Endothelial cell of umbilical vein (primary cell): ENCODE measurements at regions of chr11 and their contacts with region 1.

Region 1: GRCh38 chr11:78000193-78000592 is 5.7 kb upstream of the INTS4 start:
- DNase-seq: peak; percentile 74
- H3K4me3 ChIP-seq: no peak overlapping the region
- H3K27ac ChIP-seq: no peak overlapping the region
- H3K4me1 ChIP-seq: peaks cover 1% of the 10 kb centered on the region
- H3K27me3 ChIP-seq: peaks cover 0 to 2% of the 10 kb centered on the region in 2 experiments
- CTCF ChIP-seq: peak; percentile 70 to 74
- POLR2A ChIP-seq: no peak

Region 2: GRCh38 chr11:77776455-77776854 is 223.7 kb before region 1 on chr11:
- CTCF ChIA-PET with region 1: interaction called, 29 read pairs
- POLR2A ChIA-PET with region 1: no interaction called
- dilution Hi-C with region 1: no loop called
- intact Hi-C with region 1: loop called (anchors 1 kb)
- DNase-seq: peak; percentile 49
- H3K4me3 ChIP-seq: no peak overlapping the region
- H3K27ac ChIP-seq: no peak overlapping the region
- H3K4me1 ChIP-seq: peaks cover 6% of the 10 kb centered on the region
- H3K27me3 ChIP-seq: no peaks in the 10 kb centered on the region
- CTCF ChIP-seq: peak in 1 of 2 donors; percentile 12
- POLR2A ChIP-seq: no peak

Region 3: GRCh38 chr11:78022397-78023396 is 22.5 kb after region 1 on chr11 and contains the start of gene KCTD14:
- CTCF ChIA-PET with region 1: interaction called, 9 read pairs
- POLR2A ChIA-PET with region 1: no interaction called
- dilution Hi-C with region 1: no loop called
- intact Hi-C with region 1: loop called (anchors 1 kb)
- DNase-seq: no peak
- H3K4me3 ChIP-seq: peak within 1 kb of the TSS in 2 of 3 experiments; percentile 31 to 41
- H3K27ac ChIP-seq: no peak within 1 kb of the TSS
- H3K4me1 ChIP-seq: peaks cover 5% of the 10 kb centered on the region
- H3K27me3 ChIP-seq: no peaks in the 10 kb centered on the region
- CTCF ChIP-seq: no peak
- POLR2A ChIP-seq: no peak
- total RNA-seq, gene KCTD14: 1.1 and 1.8 TPM in 2 replicates

Region 4: GRCh38 chr11:78030429-78031325 is 30.5 kb after region 1 on chr11:
- CTCF ChIA-PET with region 1: interaction called, 5 read pairs
- POLR2A ChIA-PET with region 1: no interaction called
- dilution Hi-C with region 1: no loop called
- intact Hi-C with region 1: loop called (anchors 2 kb)
- DNase-seq: peak; percentile 96
- H3K4me3 ChIP-seq: no peak overlapping the region
- H3K27ac ChIP-seq: peak overlapping the region; percentile 40
- H3K4me1 ChIP-seq: peaks cover 13% of the 10 kb centered on the region
- H3K27me3 ChIP-seq: no peaks in the 10 kb centered on the region
- CTCF ChIP-seq: no peak
- POLR2A ChIP-seq: no peak